ENCODE measurements at regions of chr2 and their contacts with region 1.

Region 1: DNA sequence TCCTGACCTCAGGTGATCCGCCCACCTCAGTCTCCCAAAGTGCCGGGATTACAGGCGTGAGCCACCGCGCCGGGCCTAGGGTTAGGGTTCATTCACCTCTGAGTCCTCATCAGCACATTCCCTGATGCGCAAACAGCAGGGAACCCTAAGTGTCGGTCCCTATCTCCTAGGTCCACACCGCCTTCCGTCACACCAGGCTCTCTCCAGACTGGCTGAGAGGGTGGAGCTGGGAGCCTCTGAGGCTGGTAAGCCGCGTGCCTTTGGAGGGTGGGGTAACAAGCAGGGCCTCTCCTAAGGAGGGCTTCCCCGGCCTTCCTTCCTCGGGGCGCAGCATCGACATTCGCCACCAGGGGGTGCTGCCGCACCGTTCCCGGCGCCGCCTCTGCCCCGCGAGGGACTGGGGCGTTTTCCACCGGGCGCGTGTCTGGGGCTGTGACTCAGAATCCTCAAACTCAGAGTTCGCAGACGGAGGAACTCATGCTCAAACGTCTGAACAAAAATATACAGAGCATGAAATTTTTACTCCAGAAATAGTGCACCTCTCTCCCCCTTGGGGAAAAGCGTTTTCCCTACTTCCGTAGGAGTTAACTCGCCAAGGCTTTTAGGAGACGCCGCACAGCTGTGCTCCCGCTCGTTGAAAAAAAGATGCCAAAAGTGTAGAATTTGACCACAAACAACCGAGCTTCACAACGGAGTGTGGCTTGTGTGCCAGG is 63.9 kb upstream of the ASAP2 start:
- DNase-seq: peak; percentile 69 to 95 (median 90)

Region 2: DNA sequence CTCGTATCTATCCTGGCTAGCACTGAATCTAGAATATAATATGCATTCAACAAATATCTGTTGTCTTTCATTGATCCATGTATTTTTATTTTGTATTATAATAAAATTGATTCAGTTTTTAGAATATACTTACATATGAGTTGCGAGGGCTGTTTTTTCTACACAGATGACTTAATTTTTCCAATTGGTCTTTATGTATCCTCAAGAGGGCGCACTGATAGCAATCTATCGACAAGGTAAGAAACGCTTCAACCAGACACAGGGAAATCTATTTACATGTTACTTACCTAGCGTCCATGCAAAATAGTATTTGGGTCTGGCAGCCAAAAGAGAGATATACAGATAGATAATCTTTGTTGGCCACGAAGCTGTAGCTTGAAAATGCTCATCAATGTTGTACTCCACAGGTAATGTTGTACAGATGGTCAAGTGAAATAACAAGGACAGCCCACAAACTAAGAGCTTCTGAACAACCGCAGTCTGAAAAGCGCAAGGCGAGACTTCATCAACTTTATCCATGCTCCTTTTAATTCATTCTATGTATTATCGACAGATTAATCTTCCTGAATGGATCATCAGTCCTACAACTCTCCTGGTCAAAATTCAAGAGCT is 269.8 kb before region 1 on chr2:
- intact Hi-C with region 1: loop called (anchors 5 kb)
- DNase-seq: peak in 6 of 42 donors; percentile 20 to 56 (median 36)

Region 3: GRCh38 chr2:9003616-9004337 is 138.9 kb before region 1 on chr2 and contains the start of gene MBOAT2:
- intact Hi-C with region 1: loop called (anchors 10 kb)
- DNase-seq: peak; percentile 66 to 97 (median 91)

Region 4: DNA sequence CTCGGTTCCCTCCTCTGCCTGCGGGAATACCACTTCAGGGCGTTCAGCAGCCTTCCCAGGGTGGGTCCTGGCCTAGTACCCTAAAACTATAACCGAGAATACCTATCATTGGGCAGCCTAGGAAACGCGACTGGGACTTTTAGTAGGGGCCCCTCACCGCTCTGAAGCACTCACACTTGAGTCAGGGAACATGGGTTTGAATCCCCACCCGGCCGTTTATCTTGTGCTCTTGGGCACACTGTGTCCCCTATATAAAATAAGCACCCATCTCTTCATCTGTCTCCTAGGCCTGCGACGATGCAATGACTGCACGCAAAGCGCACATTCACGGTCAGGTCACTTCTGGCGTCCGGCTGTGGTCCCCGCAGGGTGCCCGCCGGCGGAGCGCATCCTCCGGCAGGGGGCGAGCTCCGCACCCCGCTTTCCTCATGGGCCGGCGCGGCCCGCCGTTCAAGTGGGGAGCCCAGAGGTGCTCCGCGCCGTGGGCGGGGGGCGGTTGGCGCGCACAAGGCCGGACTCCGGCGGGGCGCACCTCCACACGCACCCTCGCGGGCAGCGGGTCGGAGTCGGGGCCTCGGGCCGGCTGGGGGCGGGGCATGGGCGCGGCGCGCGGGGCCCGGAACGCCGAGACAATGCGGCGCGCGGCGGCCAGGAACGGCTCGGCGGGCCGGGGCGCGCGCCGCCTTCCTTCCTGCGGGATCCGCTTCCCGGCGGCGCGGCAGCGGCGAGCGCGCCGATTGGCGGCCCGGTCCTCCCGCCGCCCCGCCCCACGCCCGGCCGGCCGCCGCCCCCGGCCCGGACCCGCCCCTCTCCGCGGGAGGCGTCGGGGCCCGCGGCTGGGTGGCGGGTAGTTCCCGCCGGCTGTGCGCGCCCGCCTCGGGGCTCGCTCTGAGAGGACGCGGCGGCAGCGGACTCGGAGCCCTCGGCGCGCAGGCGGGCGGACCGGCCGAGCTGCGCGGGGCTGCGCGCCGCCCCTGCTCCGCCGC is 63.5 kb after region 1 on chr2 and contains the start of gene ASAP2:
- intact Hi-C with region 1: loop called (anchors 5 kb)
- DNase-seq: peak; percentile 19 to 89 (median 74)

Region 5: GRCh38 chr2:9333591-9334171 is 191.0 kb after region 1 on chr2:
- intact Hi-C with region 1: loop called (anchors 10 kb)
- DNase-seq: peak in 40 of 42 donors; percentile 37 to 82 (median 65)

Region 6: GRCh38 chr2:9373077-9373875 is 230.6 kb after region 1 on chr2:
- intact Hi-C with region 1: loop called (anchors 5 kb)
- DNase-seq: no peak